ENCODE measurements at regions of chr3 and their contacts with region 1.

Region 1: DNA sequence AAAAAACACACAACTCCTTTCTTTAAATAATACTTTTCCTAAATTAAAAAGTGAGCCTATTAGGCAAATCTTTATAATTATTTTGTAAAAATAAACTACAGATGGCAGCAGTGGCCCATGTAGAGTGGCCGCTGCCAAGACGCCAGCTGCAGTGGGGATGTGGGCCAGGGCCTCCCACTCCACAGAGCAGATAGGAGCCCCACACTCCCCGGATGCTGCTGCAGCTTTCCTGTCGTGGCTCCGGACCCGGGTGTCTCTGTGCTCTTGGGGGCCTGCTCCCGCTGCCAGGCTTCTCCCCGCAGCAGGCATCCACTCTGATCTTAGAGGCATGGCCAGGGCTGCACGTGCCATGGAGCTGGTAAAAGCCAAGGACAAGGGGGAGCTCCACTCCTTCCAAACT is 67.5 kb downstream of the PROS1 start:
- DNase-seq: peak in 4 of 5 donors; percentile 30 to 56 (median 47)
- ATAC-seq: peak in 3 of 4 donors; percentile 69 to 90 (median 74)
- H3K4me3 ChIP-seq: no peak overlapping the region
- H3K27ac ChIP-seq: no peak overlapping the region
- H3K4me1 ChIP-seq: peaks cover 0 to 13% (median 0%) of the 10 kb centered on the region in 12 donors
- H3K27me3 ChIP-seq: no peaks in the 10 kb centered on the region
- CTCF ChIP-seq: peak in 9 of 12 donors; percentile 10 to 42 (median 24)
- POLR2A ChIP-seq: no peak

Region 2: GRCh38 chr3:93973131-93974126 is 67.2 kb after region 1 on chr3 and contains the start of gene PROS1:
- intact Hi-C with region 1: loop called in 1 of 10 experiments (anchors 2 kb)
- DNase-seq: peak; percentile 89 to 93 (median 92)
- ATAC-seq: peak; percentile 78 to 98 (median 96)
- H3K4me3 ChIP-seq: peak within 1 kb of the TSS; percentile 43 to 93 (median 65)
- H3K27ac ChIP-seq: peak within 1 kb of the TSS; percentile 76 to 97 (median 90)
- H3K4me1 ChIP-seq: peaks cover 0 to 36% (median 11%) of the 10 kb centered on the region in 12 donors
- H3K27me3 ChIP-seq: no peaks in the 10 kb centered on the region
- CTCF ChIP-seq: peak in 3 of 12 donors; percentile 10 to 18 (median 16)
- POLR2A ChIP-seq: peak in 1 of 2 donors; percentile 72
- total RNA-seq, gene PROS1: 45.9 to 203 (median 69.3) TPM

Region 3: DNA sequence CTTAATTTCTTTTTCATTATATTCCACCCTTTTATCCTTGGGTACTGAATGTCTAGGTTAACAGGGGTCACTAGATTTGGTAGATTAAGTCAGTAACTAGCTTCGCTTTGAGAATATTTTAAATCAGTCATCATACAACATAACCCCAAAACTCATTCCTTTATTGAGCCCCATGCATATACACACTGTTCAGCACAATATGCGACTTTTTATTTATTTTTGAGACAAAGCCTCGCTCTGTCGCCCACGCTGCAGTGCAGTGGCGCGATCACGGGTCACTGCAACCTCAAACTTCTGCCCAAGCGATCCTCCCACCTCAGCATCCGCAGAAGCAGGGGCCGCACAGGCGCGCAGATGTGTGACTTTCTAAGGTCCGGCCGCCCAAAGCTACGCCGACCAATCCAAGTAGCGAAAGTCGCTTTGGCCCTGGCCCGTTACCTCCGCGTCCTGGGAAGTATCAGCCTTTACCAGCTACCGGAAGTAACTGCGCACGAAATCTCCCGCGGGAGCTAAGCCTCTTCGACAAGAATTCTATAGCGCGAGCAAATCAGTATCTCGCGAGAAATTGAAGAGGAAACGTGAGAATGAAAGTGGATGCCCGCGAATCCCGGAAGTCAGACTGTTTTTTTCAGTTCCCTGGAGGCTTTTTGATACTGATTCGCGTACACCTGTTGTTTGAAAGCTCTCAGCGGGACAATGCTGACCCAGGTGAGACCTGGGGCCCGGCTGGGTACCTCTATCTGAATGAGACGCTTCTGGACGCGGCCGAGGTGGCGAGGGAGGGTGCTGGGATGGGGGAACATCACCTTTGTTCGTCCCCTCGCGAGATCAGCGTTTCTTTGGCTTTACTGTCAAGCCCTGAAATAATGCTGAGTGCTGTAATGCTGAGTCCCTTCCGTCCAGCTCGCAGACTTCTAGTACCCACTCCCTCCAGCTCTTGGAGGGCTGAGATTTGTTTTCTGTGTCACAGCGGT is 156.5 kb after region 1 on chr3 and contains the starts of genes DHFR2 and NSUN3:
- intact Hi-C with region 1: loop called in 7 of 10 experiments (anchors 5 to 10 kb)
- DNase-seq: peak; percentile 91 to 95 (median 93)
- ATAC-seq: peak; percentile 91 to 98 (median 97)
- H3K4me3 ChIP-seq: peak within 1 kb of the TSS; percentile 40 to 85 (median 72)
- H3K27ac ChIP-seq: peak within 1 kb of the TSS; percentile 79 to 99 (median 90)
- H3K4me1 ChIP-seq: peaks cover 3 to 43% (median 20%) of the 10 kb centered on the region in 12 donors
- H3K27me3 ChIP-seq: no peaks in the 10 kb centered on the region
- CTCF ChIP-seq: no peak
- POLR2A ChIP-seq: peak in 1 of 2 donors; percentile 55
- total RNA-seq, gene DHFR2: 1.6 to 5.4 (median 3.7) TPM
- total RNA-seq, gene NSUN3: 4.1 to 11.2 (median 7.5) TPM

Region 4: GRCh38 chr3:94069194-94069813 is 163.1 kb after region 1 on chr3:
- intact Hi-C with region 1: loop called in 7 of 10 experiments (anchors 5 to 10 kb)
- DNase-seq: no peak
- ATAC-seq: no peak
- H3K4me3 ChIP-seq: no peak overlapping the region
- H3K27ac ChIP-seq: no peak overlapping the region
- H3K4me1 ChIP-seq: peaks cover 0 to 30% (median 7%) of the 10 kb centered on the region in 12 donors
- H3K27me3 ChIP-seq: no peaks in the 10 kb centered on the region
- CTCF ChIP-seq: peak; percentile 50 to 80 (median 68)
- POLR2A ChIP-seq: no peak

Region 5: GRCh38 chr3:94083261-94083660 is 177.0 kb after region 1 on chr3:
- intact Hi-C with region 1: loop called in 1 of 10 experiments (anchors 5 kb)
- DNase-seq: no peak
- ATAC-seq: no peak
- H3K4me3 ChIP-seq: no peak overlapping the region
- H3K27ac ChIP-seq: no peak overlapping the region
- H3K4me1 ChIP-seq: peaks cover 0 to 7% (median 0%) of the 10 kb centered on the region in 12 donors
- H3K27me3 ChIP-seq: no peaks in the 10 kb centered on the region
- CTCF ChIP-seq: no peak
- POLR2A ChIP-seq: no peak